ENCODE measurements at regions of chr22 and their contacts with region 1.

Region 1: GRCh38 chr22:30005213-30005857 is 74.9 kb upstream of the HORMAD2 start:
- DNase-seq: peak; percentile 57
- H3K4me3 ChIP-seq: no peak overlapping the region
- H3K27ac ChIP-seq: no peak overlapping the region
- H3K4me1 ChIP-seq: no peaks in the 10 kb centered on the region
- H3K27me3 ChIP-seq: no peaks in the 10 kb centered on the region
- CTCF ChIP-seq: peak; percentile 98 to 99

Region 2: GRCh38 chr22:29635734-29636357 is 369.5 kb before region 1 on chr22:
- CTCF ChIA-PET with region 1: no interaction called
- dilution Hi-C with region 1: no loop called
- in situ Hi-C with region 1: no loop called
- intact Hi-C with region 1: loop called (anchors 1 kb)
- DNase-seq: peak; percentile 39
- H3K4me3 ChIP-seq: no peak overlapping the region
- H3K27ac ChIP-seq: no peak overlapping the region
- H3K4me1 ChIP-seq: peaks cover 3% of the 10 kb centered on the region
- H3K27me3 ChIP-seq: no peaks in the 10 kb centered on the region
- CTCF ChIP-seq: peak; percentile 56 to 76

Region 3: GRCh38 chr22:29689880-29690213 is 315.5 kb before region 1 on chr22:
- CTCF ChIA-PET with region 1: interaction called, 3 read pairs
- dilution Hi-C with region 1: no loop called
- in situ Hi-C with region 1: loop called in 1 of 2 experiments (anchors 25 kb)
- intact Hi-C with region 1: loop called (anchors 1 kb)
- DNase-seq: peak; percentile 23
- H3K4me3 ChIP-seq: no peak overlapping the region
- H3K27ac ChIP-seq: no peak overlapping the region
- H3K4me1 ChIP-seq: peaks cover 10% of the 10 kb centered on the region
- H3K27me3 ChIP-seq: no peaks in the 10 kb centered on the region
- CTCF ChIP-seq: peak; percentile 59 to 81

Region 4: GRCh38 chr22:29701155-29701999 is 304.0 kb before region 1 on chr22:
- CTCF ChIA-PET with region 1: interaction called, 7 read pairs
- dilution Hi-C with region 1: no loop called
- in situ Hi-C with region 1: loop called in 1 of 2 experiments (anchors 25 kb)
- intact Hi-C with region 1: loop called (anchors 5 kb)
- DNase-seq: no peak
- H3K4me3 ChIP-seq: no peak overlapping the region
- H3K27ac ChIP-seq: no peak overlapping the region
- H3K4me1 ChIP-seq: no peaks in the 10 kb centered on the region
- H3K27me3 ChIP-seq: no peaks in the 10 kb centered on the region
- CTCF ChIP-seq: no peak

Region 5: GRCh38 chr22:29766632-29767170 is 238.6 kb before region 1 on chr22 and contains the start of gene ZMAT5:
- CTCF ChIA-PET with region 1: interaction called, 3 read pairs
- dilution Hi-C with region 1: no loop called
- in situ Hi-C with region 1: no loop called
- intact Hi-C with region 1: loop called (anchors 1 kb)
- DNase-seq: peak; percentile 97
- H3K4me3 ChIP-seq: peak within 1 kb of the TSS; percentile 72 to 97 (median 80)
- H3K27ac ChIP-seq: peak within 1 kb of the TSS; percentile 82
- H3K4me1 ChIP-seq: peaks cover 12% of the 10 kb centered on the region
- H3K27me3 ChIP-seq: no peaks in the 10 kb centered on the region
- CTCF ChIP-seq: no peak
- total RNA-seq, gene ZMAT5: 15.3 to 15.5 TPM

Measured in mammary epithelial cell (primary cell).